Sigmoid colon (tissue), 7 donors: ENCODE measurements at regions of chr9 and their contacts with region 1.

Region 1: GRCh38 chr9:109745335-109746283 is 34.4 kb upstream of the PALM2AKAP2 start:
- DNase-seq: peak; percentile 94
- H3K4me3 ChIP-seq: no peak overlapping the region
- H3K27ac ChIP-seq: peak overlapping the region; percentile 60 to 81 (median 66)
- H3K4me1 ChIP-seq: peaks cover 0 to 26% (median 24%) of the 10 kb centered on the region in 4 donors
- H3K27me3 ChIP-seq: no peaks in the 10 kb centered on the region
- CTCF ChIP-seq: no peak
- EP300 ChIP-seq: peak in 3 of 4 donors; percentile 42 to 92 (median 73)
- POLR2A ChIP-seq: no peak

Region 2: GRCh38 chr9:110125207-110125751 is 379.7 kb after region 1 on chr9:
- intact Hi-C with region 1: loop called (anchors 5 kb)
- DNase-seq: peak; percentile 97
- H3K4me3 ChIP-seq: peak overlapping the region; percentile 25 to 47 (median 38)
- H3K27ac ChIP-seq: peak overlapping the region; percentile 87 to 91 (median 90)
- H3K4me1 ChIP-seq: peaks cover 0 to 74% (median 65%) of the 10 kb centered on the region in 4 donors
- H3K27me3 ChIP-seq: no peaks in the 10 kb centered on the region
- CTCF ChIP-seq: no peak
- EP300 ChIP-seq: peak in 2 of 4 donors; percentile 61 to 74
- POLR2A ChIP-seq: peak in 1 of 2 donors; percentile 64

Region 3: GRCh38 chr9:110188991-110189390 is 443.4 kb after region 1 on chr9:
- intact Hi-C with region 1: loop called (anchors 5 kb)
- DNase-seq: peak; percentile 90
- H3K4me3 ChIP-seq: no peak overlapping the region
- H3K27ac ChIP-seq: peak overlapping the region; percentile 62 to 84 (median 71)
- H3K4me1 ChIP-seq: peaks cover 0 to 51% (median 43%) of the 10 kb centered on the region in 4 donors
- H3K27me3 ChIP-seq: no peaks in the 10 kb centered on the region
- CTCF ChIP-seq: no peak
- EP300 ChIP-seq: peak in 3 of 4 donors; percentile 15 to 90 (median 84)
- POLR2A ChIP-seq: no peak